IMR-90 (cell line): ENCODE measurements at regions of chr12 and their contacts with region 1.

Region 1: DNA sequence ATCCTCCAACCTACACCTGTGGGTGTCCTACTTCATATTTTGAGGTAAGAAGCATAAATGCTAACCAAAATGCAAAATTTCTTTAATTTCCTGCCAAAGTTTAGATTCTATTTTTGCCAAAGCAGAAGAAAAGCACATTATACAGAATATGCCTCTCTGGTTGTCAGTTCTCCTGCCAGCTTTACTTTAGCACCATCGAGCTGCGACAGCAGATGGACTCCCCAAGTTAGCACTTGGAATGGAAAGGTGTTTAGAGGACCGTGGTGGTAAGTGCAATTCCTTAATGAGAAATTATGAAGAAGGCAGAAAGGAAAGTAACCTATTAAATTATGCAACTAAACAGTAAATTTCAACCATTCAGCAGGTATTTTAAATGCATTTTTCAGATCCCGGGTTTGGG is 326.6 kb downstream of the RERGL start:
- DNase-seq: no peak
- ATAC-seq: no peak
- H3K4me3 ChIP-seq: no peak overlapping the region
- H3K27ac ChIP-seq: no peak overlapping the region
- H3K4me1 ChIP-seq: no peaks in the 10 kb centered on the region
- H3K27me3 ChIP-seq: no peaks in the 10 kb centered on the region
- CTCF ChIP-seq: no peak
- POLR2A ChIP-seq: no peak
- RAD21 ChIP-seq: no peak

Region 2: DNA sequence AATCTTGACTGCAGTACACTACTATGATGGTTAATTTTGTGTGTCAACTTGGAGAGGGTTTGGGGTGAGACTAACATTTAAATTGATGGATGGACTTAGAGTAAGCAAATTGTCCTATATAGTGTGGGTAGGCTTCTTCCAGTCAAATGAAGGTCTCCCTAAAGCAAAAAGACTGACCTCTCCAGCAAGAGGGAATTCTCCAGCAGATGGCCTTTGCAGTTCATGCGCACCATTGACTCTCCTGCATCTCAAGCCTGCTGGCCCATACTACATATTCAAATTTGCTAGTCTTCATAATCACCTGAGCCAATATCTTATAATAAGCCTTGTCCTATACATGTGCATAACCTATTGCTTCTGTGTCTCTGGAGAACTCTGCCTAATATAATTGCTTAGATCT is 66.4 kb after region 1 on chr12:
- CTCF ChIA-PET with region 1: no interaction called
- POLR2A ChIA-PET with region 1: no interaction called
- dilution Hi-C with region 1: no loop called
- in situ Hi-C with region 1: no loop called
- intact Hi-C with region 1: no loop called
- DNase-seq: no peak
- ATAC-seq: no peak
- H3K4me3 ChIP-seq: no peak overlapping the region
- H3K27ac ChIP-seq: no peak overlapping the region
- H3K4me1 ChIP-seq: no peaks in the 10 kb centered on the region
- H3K27me3 ChIP-seq: no peaks in the 10 kb centered on the region
- CTCF ChIP-seq: no peak
- POLR2A ChIP-seq: no peak
- RAD21 ChIP-seq: no peak

Region 3: GRCh38 chr12:17841496-17841895 is 78.1 kb after region 1 on chr12:
- CTCF ChIA-PET with region 1: no interaction called
- POLR2A ChIA-PET with region 1: no interaction called
- dilution Hi-C with region 1: no loop called
- in situ Hi-C with region 1: loop called (anchors 5 kb)
- intact Hi-C with region 1: loop called (anchors 5 kb)
- DNase-seq: no peak
- ATAC-seq: no peak
- H3K4me3 ChIP-seq: no peak overlapping the region
- H3K27ac ChIP-seq: no peak overlapping the region
- H3K4me1 ChIP-seq: no peaks in the 10 kb centered on the region
- H3K27me3 ChIP-seq: no peaks in the 10 kb centered on the region
- CTCF ChIP-seq: no peak
- POLR2A ChIP-seq: no peak
- RAD21 ChIP-seq: no peak